ENCODE measurements at regions of chr12 and their contacts with region 1.

Region 1: DNA sequence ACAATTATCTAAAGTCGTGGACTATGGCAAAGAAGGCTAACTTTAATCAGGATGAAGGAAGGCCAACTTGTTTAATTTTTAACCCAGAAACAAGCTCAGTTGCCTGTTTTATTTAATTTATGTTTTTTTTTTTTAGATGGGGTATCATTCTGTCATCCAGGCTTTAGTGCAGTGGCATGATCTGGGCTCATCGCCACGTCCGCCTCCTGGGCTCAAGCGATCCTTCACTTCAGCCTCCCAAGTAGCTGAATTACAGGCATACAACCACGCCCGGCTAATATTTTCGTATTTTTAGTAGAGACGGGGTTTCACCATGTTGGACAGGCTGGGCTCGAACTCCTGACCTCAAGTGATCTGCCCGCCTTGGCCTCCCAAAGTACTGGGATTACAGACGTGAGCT is 19.7 kb downstream of the NUDT4 start:
- DNase-seq: no peak
- H3K4me3 ChIP-seq: no peak overlapping the region
- H3K4me3 Mint-ChIP-seq: no peak overlapping the region
- H3K27ac ChIP-seq: no peak overlapping the region
- H3K27ac Mint-ChIP-seq: no peak overlapping the region
- H3K4me1 ChIP-seq: no peaks in the 10 kb centered on the region
- H3K4me1 Mint-ChIP-seq: peaks cover 0 to 7% (median 0%) of the 10 kb centered on the region in 4 donors
- H3K27me3 ChIP-seq: no peaks in the 10 kb centered on the region
- H3K27me3 Mint-ChIP-seq: no peaks in the 10 kb centered on the region

Region 2: DNA sequence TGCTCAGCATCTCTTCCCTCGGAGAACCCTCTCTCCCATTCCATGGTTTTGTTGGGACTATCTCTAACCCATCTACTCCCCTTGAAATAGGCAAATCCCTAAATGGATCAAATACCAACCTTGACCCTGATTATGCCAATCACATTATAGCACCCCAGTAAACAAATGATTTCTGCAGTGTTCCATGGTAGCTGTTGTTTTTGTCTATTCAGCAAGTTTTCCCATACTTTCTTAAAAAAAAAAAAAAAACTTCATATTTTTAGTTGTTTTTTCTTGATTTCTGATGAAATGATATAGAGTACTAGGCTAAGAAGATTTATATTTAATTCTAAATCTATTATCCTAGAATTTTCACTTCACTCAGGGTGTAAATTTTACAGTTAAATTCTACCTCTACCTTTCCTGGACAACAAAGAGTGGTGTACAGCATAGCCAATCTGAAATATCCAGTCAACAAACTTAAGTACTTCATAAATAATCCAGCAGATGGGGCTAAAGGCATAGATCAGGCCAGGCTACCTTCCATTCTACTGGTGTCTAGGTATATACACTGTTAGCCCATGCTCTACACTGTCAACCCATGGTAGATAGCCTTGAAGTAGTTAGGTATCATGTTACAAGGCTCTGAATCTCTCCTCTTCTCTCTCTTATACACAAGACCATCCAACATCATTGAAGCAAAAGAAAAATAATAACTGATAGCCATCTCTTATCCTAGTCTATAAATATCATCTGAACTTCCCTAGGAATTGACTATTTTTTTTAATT is 612.4 kb before region 1 on chr12:
- CTCF ChIA-PET with region 1: interaction called, 21 read pairs
- POLR2A ChIA-PET with region 1: no interaction called
- intact Hi-C with region 1: loop called (anchors 1 kb)
- DNase-seq: peak; percentile 54 to 73 (median 67)
- H3K4me3 ChIP-seq: no peak overlapping the region
- H3K4me3 Mint-ChIP-seq: no peak overlapping the region
- H3K27ac ChIP-seq: no peak overlapping the region
- H3K27ac Mint-ChIP-seq: peak overlapping the region in 1 of 7 donors; percentile 4
- H3K4me1 ChIP-seq: no peaks in the 10 kb centered on the region
- H3K4me1 Mint-ChIP-seq: peaks cover 0 to 4% (median 2%) of the 10 kb centered on the region in 4 donors
- H3K27me3 ChIP-seq: no peaks in the 10 kb centered on the region
- H3K27me3 Mint-ChIP-seq: no peaks in the 10 kb centered on the region

Region 3: DNA sequence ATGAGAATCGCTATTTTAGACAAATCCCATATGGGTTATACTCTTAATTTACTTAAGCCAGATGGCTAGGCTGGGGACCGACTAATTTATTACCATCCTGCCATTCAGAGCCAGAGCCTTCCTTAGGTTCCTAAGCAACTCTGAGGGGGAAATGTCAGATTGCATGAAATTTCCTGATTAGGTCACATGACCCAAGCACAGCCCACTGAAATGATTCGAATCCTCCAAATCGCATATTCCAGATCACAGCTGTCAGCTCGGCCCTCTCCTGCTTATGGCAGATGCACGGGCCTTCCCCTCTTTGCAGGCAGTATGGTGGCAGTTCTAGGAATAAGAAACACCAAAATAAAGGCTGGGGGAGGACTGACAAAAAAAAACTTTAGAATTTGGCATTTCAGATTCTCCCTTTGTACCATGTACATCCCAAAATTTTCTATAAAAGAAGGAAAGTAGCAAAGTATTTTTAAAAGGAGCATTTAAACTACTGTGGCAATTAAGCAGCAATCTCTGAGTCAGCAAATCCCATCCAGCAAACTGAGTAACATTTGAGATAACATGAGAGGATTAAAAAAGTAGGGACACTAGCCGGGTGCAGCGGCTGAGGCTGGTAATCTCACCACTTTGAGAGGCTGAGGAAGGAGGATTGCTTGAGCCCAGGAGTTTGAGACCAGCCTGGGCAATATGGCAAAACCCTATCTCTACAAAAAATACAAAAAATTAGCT is 50.2 kb before region 1 on chr12:
- CTCF ChIA-PET with region 1: no interaction called
- POLR2A ChIA-PET with region 1: no interaction called
- intact Hi-C with region 1: no loop called
- DNase-seq: no peak
- H3K4me3 ChIP-seq: no peak overlapping the region
- H3K4me3 Mint-ChIP-seq: no peak overlapping the region
- H3K27ac ChIP-seq: no peak overlapping the region
- H3K27ac Mint-ChIP-seq: no peak overlapping the region
- H3K4me1 ChIP-seq: no peaks in the 10 kb centered on the region
- H3K4me1 Mint-ChIP-seq: no peaks in the 10 kb centered on the region
- H3K27me3 ChIP-seq: no peaks in the 10 kb centered on the region
- H3K27me3 Mint-ChIP-seq: peaks cover 2 to 5% of the 10 kb centered on the region in 2 donors

Region 4: GRCh38 chr12:93378373-93379325 is 18.8 kb before region 1 on chr12:
- CTCF ChIA-PET with region 1: interaction called, 39 read pairs
- POLR2A ChIA-PET with region 1: interaction called, 4 read pairs
- intact Hi-C with region 1: loop called (anchors 2 kb)
- DNase-seq: peak; percentile 63 to 73 (median 69)
- H3K4me3 ChIP-seq: peak overlapping the region; percentile 71 to 88
- H3K4me3 Mint-ChIP-seq: peak overlapping the region; percentile 98 to 100 (median 99)
- H3K27ac ChIP-seq: peak overlapping the region; percentile 84
- H3K27ac Mint-ChIP-seq: peak overlapping the region; percentile 96 to 100 (median 99)
- H3K4me1 ChIP-seq: peaks cover 43% of the 10 kb centered on the region
- H3K4me1 Mint-ChIP-seq: peaks cover 28 to 57% (median 43%) of the 10 kb centered on the region in 4 donors
- H3K27me3 ChIP-seq: no peaks in the 10 kb centered on the region
- H3K27me3 Mint-ChIP-seq: no peaks in the 10 kb centered on the region

Measured in CD4-positive, alpha-beta memory T cell (primary cell).